Gastrocnemius medialis (tissue), 4 donors: ENCODE measurements at regions of chr21 and their contacts with region 1.

Region 1: GRCh38 chr21:45050786-45051489 is 23.4 kb upstream of the ADARB1 start:
- DNase-seq: peak in 1 of 2 donors; percentile 84
- ATAC-seq: peak; percentile 28 to 49
- H3K4me3 ChIP-seq: peak overlapping the region in 1 of 4 donors; percentile 3
- H3K27ac ChIP-seq: peak overlapping the region; percentile 85 to 93 (median 92)
- H3K4me1 ChIP-seq: peaks cover 36 to 47% of the 10 kb centered on the region in 2 donors
- H3K27me3 ChIP-seq: no peaks in the 10 kb centered on the region
- CTCF ChIP-seq: no peak
- POLR2A ChIP-seq: no peak

Region 2: GRCh38 chr21:44854664-44855446 is 196.1 kb before region 1 on chr21:
- in situ Hi-C with region 1: no loop called
- intact Hi-C with region 1: loop called (anchors 5 kb)
- DNase-seq: peak; percentile 62 to 89
- ATAC-seq: peak; percentile 70 to 72
- H3K4me3 ChIP-seq: peak overlapping the region in 2 of 4 donors; percentile 9 to 16
- H3K27ac ChIP-seq: peak overlapping the region; percentile 87 to 89 (median 88)
- H3K4me1 ChIP-seq: peaks cover 42 to 48% of the 10 kb centered on the region in 2 donors
- H3K27me3 ChIP-seq: no peaks in the 10 kb centered on the region
- CTCF ChIP-seq: peak in 2 of 5 experiments; percentile 12 to 18
- POLR2A ChIP-seq: peak in 1 of 2 donors; percentile 46

Region 3: DNA sequence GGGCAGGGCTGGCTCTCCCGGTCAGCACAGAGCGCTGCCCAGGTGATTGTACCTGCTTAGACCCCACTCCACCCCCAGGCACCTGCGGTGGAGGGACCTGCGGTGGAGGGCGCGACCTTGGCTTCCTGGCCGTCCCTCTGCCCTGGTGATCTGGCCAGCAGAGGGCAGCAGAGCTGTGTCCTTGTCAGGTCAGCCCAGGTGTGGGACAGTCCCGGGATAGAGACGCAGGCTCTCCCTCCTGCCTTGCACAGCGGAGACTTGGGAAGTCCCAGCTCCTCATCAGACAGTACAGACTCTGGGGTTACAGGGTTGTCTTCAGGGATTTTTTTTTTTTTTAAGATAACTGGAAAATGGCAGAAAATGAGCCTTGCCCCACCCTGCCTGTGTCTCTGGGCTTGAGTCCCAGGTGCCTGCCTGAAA is 101.1 kb before region 1 on chr21:
- in situ Hi-C with region 1: loop called in 2 of 4 experiments (anchors 5 to 10 kb)
- intact Hi-C with region 1: loop called (anchors 2 kb)
- DNase-seq: peak; percentile 82 to 94
- ATAC-seq: peak; percentile 40 to 53
- H3K4me3 ChIP-seq: no peak overlapping the region
- H3K27ac ChIP-seq: peak overlapping the region; percentile 47 to 96 (median 92)
- H3K4me1 ChIP-seq: peaks cover 63 to 64% of the 10 kb centered on the region in 2 donors
- H3K27me3 ChIP-seq: no peaks in the 10 kb centered on the region
- CTCF ChIP-seq: peak; percentile 90 to 98 (median 96)
- POLR2A ChIP-seq: peak in 1 of 2 donors; percentile 8

Region 4: DNA sequence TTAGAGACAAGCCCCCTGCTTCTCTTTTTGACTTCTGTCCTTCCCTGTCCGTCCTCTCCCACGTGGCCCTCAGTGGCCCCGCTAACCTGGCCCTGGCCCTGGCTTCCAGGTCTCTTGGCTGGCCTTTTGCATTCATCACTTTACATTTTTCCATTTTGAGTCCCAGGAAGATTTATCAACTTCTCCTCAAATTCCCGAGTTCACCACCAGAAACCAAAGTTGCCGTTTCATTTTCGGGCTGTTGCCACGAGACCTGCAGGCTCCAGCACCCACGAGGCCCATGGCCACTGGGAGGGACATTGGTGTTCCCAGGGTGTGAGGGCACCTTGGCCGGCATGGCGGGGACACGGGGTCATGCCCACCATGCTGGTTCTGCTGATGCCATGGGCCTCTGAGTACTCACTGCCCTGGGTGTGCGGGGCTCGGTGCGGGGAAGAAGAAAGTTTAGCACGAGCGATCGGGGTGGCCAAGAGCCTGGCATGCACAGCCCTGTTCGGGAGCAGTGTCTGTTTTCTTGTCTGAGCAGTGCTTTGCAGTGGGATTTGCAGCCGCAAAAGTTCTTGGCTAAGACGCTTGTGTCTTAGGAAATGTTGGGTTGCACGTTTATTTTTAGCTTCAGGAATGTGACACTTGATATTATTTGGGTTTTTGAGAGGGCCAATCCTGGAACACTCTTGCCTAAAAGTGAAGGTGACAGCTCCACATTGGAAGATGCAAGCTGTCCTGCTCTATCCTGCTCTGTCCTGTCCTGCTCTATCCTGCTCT is 17.0 kb before region 1 on chr21:
- in situ Hi-C with region 1: no loop called
- intact Hi-C with region 1: loop called (anchors 2 kb)
- DNase-seq: peak; percentile 72 to 82
- ATAC-seq: peak; percentile 93 to 94
- H3K4me3 ChIP-seq: peak overlapping the region in 3 of 4 donors; percentile 23 to 27 (median 26)
- H3K27ac ChIP-seq: peak overlapping the region; percentile 82 to 89 (median 82)
- H3K4me1 ChIP-seq: peaks cover 23 to 46% of the 10 kb centered on the region in 2 donors
- H3K27me3 ChIP-seq: no peaks in the 10 kb centered on the region
- CTCF ChIP-seq: no peak
- POLR2A ChIP-seq: peak; percentile 25 to 32

Region 5: DNA sequence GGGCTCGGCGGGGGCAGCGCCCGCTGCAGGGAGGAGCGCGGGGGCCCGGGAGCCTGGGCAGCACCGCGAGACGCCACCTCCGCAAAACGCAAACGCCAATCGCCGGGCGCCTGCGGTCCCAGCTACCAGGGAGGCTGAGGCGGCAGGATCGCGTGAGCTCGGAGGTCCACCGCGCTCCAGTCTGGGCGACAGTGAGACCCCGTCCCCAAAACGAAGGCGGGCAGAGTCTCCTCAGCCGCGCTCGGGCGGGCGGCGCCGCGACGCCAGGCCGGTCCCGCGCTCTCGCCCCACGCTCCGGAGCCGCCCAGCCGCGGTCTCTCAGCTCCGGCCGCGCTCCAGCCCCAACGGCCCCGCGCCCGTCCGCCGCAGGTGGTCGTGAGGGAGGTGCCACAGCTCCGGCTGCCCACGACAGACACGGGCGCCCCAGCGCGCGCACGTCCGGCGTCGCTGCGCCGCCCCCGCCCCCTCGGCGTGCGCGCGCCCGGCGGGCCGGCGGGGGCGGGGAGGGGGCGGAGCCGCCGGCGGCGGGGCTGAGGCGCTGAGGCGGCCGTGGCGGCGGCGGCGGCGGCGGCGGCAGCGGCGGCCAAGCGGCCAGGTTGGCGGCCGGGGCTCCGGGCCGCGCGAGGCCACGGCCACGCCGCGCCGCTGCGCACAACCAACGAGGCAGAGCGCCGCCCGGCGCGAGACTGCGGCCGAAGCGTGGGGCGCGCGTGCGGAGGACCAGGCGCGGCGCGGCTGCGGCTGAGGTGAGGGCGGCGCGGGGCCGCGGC is 23.3 kb after region 1 on chr21 and contains the start of gene ADARB1:
- in situ Hi-C with region 1: no loop called
- intact Hi-C with region 1: loop called (anchors 1 kb)
- DNase-seq: peak in 1 of 2 donors; percentile 51
- ATAC-seq: peak; percentile 80 to 85
- H3K4me3 ChIP-seq: peak within 1 kb of the TSS; percentile 72 to 90 (median 80)
- H3K27ac ChIP-seq: peak within 1 kb of the TSS; percentile 84 to 95 (median 91)
- H3K4me1 ChIP-seq: peaks cover 33 to 40% of the 10 kb centered on the region in 2 donors
- H3K27me3 ChIP-seq: no peaks in the 10 kb centered on the region
- CTCF ChIP-seq: no peak
- POLR2A ChIP-seq: peak; percentile 89 to 90
- total RNA-seq, gene ADARB1: 5.9 to 11.5 (median 6.9) TPM

Region 6: GRCh38 chr21:45109831-45110492 is 59.0 kb after region 1 on chr21:
- in situ Hi-C with region 1: no loop called
- intact Hi-C with region 1: no loop called
- DNase-seq: no peak
- ATAC-seq: no peak
- H3K4me3 ChIP-seq: peak overlapping the region in 2 of 4 donors; percentile 12 to 21
- H3K27ac ChIP-seq: peak overlapping the region; percentile 36 to 61 (median 54)
- H3K4me1 ChIP-seq: peaks cover 50 to 54% of the 10 kb centered on the region in 2 donors
- H3K27me3 ChIP-seq: no peaks in the 10 kb centered on the region
- CTCF ChIP-seq: no peak
- POLR2A ChIP-seq: no peak

Region 7: DNA sequence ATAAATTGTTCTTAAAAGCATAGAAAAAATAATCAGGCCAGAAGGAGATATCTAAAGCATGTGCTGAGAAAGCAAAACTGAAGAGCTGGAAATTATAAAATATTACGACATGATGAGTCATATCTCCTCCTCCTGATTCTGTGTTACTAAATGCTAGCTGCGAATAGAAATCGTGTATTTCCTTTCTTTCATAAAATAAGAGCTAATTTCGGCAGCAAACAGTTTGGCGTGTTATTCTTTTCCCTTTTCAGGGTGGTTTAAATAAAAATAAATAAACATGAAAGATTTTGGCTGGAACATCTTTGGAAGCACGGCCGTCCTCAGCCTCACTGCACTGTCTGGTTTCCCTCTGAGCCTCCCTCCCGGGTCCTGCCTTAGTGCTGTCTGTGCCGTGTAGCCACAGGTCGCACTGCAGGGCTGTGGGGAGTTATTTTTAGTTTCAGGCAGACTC is 79.4 kb after region 1 on chr21:
- in situ Hi-C with region 1: loop called in 3 of 4 experiments (anchors 10 kb)
- intact Hi-C with region 1: loop called (anchors 1 kb)
- DNase-seq: no peak
- ATAC-seq: no peak
- H3K4me3 ChIP-seq: peak overlapping the region; percentile 2 to 24 (median 22)
- H3K27ac ChIP-seq: peak overlapping the region; percentile 68 to 79 (median 74)
- H3K4me1 ChIP-seq: peaks cover 66 to 71% of the 10 kb centered on the region in 2 donors
- H3K27me3 ChIP-seq: no peaks in the 10 kb centered on the region
- CTCF ChIP-seq: no peak
- POLR2A ChIP-seq: peak in 1 of 2 donors; percentile 50